Naive thymus-derived CD4-positive, alpha-beta T cell (primary cell): ENCODE measurements at regions of chr1 and their contacts with region 1.

Region 1: DNA sequence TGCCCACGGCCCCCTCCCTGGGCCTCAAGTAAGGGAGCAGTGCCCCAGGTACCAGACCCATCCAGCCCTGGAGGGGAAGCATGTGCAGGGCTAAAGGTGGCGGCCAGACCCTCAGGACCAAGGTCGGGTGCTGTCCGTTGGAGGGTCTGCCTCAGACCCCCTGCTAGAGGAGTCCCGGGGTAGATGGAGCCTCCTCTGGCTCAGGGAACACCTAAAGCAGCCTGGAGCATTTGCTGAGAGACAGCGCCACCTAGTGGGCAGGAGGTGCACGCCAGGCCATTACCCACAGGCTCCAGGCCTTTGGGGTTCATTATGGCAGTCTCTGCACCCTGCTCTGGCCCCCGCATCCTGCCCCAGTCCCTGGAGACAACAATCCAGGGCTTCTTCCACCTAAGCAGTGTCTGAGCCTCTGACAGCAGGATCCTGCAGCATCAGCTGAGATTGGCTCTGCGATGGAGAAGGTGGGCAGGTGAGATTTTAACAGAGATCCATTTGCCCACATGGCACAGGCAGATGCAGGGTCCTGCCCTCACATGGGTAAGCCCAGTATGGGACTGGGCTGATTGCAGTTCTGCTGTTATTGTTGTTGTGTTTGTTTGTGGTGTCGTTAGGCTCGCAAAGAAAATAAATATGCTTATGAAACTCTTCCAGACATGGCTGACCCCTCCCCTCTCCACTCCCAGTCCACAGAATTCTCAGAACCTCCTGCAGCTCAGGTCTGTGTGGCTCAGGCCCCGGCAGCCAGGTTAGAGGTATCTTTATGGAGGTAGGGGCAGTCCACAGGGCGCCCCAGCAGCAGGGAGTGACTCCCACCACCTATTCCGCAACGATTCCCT is 42.4 kb downstream of the CTNNBIP1 start:
- DNase-seq: peak; percentile 70 to 90 (median 84)
- ATAC-seq: peak; percentile 96
- H3K4me3 ChIP-seq: no peak overlapping the region
- H3K4me3 Mint-ChIP-seq: no peak overlapping the region
- H3K27ac ChIP-seq: no peak overlapping the region
- H3K27ac Mint-ChIP-seq: no peak overlapping the region
- H3K4me1 ChIP-seq: no peaks in the 10 kb centered on the region
- H3K4me1 Mint-ChIP-seq: peaks cover 0 to 7% (median 3%) of the 10 kb centered on the region in 7 donors
- H3K27me3 ChIP-seq: no peaks in the 10 kb centered on the region
- H3K27me3 Mint-ChIP-seq: no peaks in the 10 kb centered on the region

Region 2: DNA sequence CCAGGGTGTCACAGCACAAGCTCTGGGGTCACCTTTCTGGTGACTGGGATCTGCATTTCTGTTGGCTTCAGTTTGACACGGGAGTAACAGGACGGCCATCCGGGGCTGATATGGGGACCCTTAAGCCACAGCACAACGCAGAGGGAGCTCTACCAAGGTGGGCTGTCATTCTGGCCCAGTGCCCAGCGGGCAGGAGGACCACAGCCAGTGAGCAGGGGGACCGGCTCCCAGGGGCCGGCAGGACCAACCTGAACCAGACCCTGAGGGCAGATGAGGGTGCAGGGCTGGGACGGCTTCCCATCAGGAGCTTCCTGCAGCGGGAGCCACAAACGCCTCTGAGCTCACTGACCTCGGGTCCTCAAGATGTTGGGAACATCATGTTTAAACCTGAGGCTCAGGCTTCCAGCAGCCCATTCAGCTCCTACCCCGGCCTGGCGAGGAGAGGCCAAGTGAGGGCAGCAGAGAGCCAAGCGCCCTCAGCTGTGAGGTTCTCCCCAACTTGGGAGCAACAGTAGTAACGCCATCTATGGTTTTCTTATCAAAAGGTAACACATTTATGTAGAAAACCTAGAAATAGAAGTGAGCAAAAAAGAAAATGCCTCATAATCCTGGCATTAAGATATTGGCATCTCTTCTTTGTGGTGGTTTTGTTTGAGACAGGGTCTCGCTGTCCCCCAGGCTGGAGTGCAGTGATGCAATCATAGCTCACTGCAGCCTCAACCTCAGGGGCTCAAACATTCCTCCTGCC is 252.1 kb before region 1 on chr1:
- CTCF ChIA-PET with region 1: interaction called, 21 read pairs
- POLR2A ChIA-PET with region 1: no interaction called
- intact Hi-C with region 1: loop called in 1 of 2 experiments (anchors 1 kb)
- DNase-seq: peak in 8 of 9 donors; percentile 40 to 63 (median 55)
- ATAC-seq: peak; percentile 89
- H3K4me3 ChIP-seq: no peak overlapping the region
- H3K4me3 Mint-ChIP-seq: no peak overlapping the region
- H3K27ac ChIP-seq: no peak overlapping the region
- H3K27ac Mint-ChIP-seq: no peak overlapping the region
- H3K4me1 ChIP-seq: no peaks in the 10 kb centered on the region
- H3K4me1 Mint-ChIP-seq: peaks cover 0 to 5% (median 0%) of the 10 kb centered on the region in 7 donors
- H3K27me3 ChIP-seq: no peaks in the 10 kb centered on the region
- H3K27me3 Mint-ChIP-seq: peaks cover 0 to 8% (median 0%) of the 10 kb centered on the region in 5 donors

Region 3: GRCh38 chr1:9724706-9725476 is 142.7 kb before region 1 on chr1:
- CTCF ChIA-PET with region 1: interaction called, 4 read pairs
- POLR2A ChIA-PET with region 1: no interaction called
- intact Hi-C with region 1: loop called (anchors 1 kb)
- DNase-seq: peak; percentile 58 to 72 (median 64)
- ATAC-seq: peak; percentile 65
- H3K4me3 ChIP-seq: no peak overlapping the region
- H3K4me3 Mint-ChIP-seq: peak overlapping the region in 8 of 10 donors; percentile 14 to 68 (median 62)
- H3K27ac ChIP-seq: peak overlapping the region; percentile 51
- H3K27ac Mint-ChIP-seq: peak overlapping the region; percentile 73 to 88 (median 80)
- H3K4me1 ChIP-seq: peaks cover 36 to 83% of the 10 kb centered on the region in 2 donors
- H3K4me1 Mint-ChIP-seq: peaks cover 38 to 84% (median 60%) of the 10 kb centered on the region in 7 donors
- H3K27me3 ChIP-seq: no peaks in the 10 kb centered on the region
- H3K27me3 Mint-ChIP-seq: no peaks in the 10 kb centered on the region